Aorta (tissue), 5 donors: ENCODE measurements at regions of chr1 and their contacts with region 1.

Region 1: GRCh38 chr1:170872663-170873062 is 62.7 kb upstream of the MROH9 start:
- DNase-seq: no peak
- ATAC-seq: no peak
- H3K4me3 ChIP-seq: no peak overlapping the region
- H3K27ac ChIP-seq: no peak overlapping the region
- H3K4me1 ChIP-seq: no peaks in the 10 kb centered on the region
- H3K27me3 ChIP-seq: no peaks in the 10 kb centered on the region

Region 2: DNA sequence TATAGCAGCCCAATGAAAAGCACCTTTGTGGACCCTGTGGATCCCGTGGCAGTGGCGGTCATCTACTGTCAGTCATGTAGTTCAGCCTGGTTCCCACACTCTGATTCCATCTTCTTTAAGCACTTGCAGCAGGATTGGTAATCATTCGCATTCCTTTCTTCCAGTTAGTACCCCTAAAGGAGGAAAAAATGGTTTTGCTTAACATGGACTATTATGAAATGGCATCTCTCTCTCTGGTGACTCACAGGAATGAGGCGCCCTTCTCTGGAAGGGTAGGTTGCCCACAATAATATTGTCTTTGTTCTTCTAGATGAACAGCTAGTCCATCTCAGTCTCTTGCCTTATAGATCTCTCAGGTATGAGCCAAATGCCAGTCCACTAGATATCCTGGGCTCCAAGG is 65.2 kb before region 1 on chr1:
- intact Hi-C with region 1: loop called in 1 of 2 experiments (anchors 5 kb)
- DNase-seq: no peak
- ATAC-seq: peak; percentile 45
- H3K4me3 ChIP-seq: no peak overlapping the region
- H3K27ac ChIP-seq: peak overlapping the region; percentile 68 to 88
- H3K4me1 ChIP-seq: peaks cover 0 to 4% of the 10 kb centered on the region in 2 donors
- H3K27me3 ChIP-seq: no peaks in the 10 kb centered on the region